K562 (cell line): ENCODE measurements at regions of chr9 and their contacts with region 1.

Region 1: DNA sequence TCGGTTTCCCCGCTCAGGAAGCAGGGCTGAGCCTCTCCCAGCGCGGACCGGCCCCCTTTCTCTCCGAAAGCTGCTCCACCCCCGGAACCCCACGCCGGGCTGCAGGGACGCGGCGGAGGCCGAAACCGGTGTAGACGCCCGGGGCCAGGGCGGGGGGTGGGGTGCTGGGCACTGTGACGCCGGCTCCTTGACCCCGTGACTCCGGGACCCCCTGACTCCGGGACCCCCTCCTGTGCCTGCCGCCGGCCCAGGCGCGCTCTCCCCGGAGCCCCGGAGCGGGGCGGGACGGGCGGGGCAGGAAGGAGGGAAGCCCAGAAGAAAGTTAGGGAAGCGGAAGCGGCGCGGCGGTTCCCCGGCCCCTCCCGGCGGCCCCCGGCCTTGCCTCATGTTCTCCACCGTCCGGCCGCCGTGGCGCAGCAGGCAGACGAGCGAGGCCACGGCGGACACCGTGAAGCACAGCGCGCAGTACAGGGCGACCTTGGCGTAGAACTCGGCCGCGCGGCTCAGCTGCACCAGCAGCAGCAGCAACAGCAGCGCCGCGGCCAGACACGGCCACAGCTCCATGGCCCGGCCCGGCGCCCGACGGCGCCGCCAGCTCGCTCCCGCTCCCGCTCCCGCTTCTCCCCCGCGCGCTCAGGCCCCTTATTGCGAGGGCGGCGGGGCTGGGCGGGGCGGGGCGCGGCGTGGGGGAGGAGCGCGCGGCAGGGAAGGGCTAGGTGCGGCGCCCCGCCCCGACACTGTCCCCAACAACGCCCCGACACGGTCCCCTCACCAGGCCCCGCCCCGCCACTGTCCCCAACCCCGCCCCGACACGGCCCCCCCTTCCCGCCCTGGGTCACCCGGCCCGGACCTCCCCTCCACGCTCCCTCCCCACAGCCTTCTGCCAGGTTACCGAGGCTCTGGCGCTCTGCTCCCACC is at the start of gene AGPAT2:
- DNase-seq: peak; percentile 89 to 99 (median 98)
- ATAC-seq: peak; percentile 92
- H3K4me3 ChIP-seq: peak within 1 kb of the TSS; percentile 81
- H3K27ac ChIP-seq: peak within 1 kb of the TSS; percentile 95
- H3K4me1 ChIP-seq: peaks cover 6 to 85% of the 10 kb centered on the region in 2 experiments; a peak in 4 of 5 replicates
- H3K27me3 ChIP-seq: no peaks in the 10 kb centered on the region
- CTCF ChIP-seq: 0 out of 6 replicates have a peak, but pooled peaks of 1 of the 3 experiments have one; percentile 1
- EP300 ChIP-seq: no peak
- POLR2A ChIP-seq: peak; percentile 86
- RAD21 ChIP-seq: peak in 1 of 2 experiments; percentile 17; a peak in 2 of 4 replicates
- polyA plus RNA-seq, gene AGPAT2: 0.13 to 0.45 TPM

Region 2: DNA sequence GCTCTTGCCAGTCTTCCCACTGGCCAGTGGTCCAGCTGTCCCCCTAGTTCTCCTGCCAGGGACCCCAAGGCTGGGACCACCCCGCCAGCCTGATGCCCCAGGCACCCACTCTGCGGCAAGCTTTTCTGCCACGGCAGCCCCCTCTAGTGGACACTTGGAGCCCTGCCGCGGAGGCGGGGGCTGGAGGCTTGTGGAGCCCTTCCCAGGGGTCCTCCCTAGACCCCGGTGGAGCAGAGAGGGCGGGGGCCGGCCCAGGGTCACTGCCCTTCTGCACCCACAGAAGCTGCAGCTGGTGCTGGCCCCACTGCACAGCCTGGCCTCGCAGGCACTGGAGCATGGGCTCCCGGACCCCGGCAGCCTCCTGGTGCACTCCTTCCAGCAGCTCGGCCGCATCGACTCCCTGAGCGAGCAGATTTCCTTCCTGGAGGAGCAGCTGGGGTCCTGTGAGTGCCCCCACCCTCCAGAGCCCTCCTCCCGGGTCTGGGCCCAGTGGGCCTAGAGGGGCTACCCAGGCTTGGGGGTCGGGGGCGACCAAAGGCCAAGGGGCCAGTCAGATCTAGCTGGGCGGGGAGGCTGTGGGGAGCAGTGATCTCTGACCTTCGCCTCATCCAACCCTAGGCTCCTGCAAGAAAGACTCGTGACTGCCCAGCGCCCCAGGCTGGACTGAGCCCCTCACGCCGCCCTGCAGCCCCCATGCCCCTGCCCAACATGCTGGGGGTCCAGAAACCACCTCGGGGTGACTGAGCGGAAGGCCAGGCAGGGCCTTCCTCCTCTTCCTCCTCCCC is 15.2 kb before region 1 on chr9:
- CTCF ChIA-PET with region 1: no interaction called
- POLR2A ChIA-PET with region 1: interaction called, 11 read pairs
- in situ Hi-C with region 1: no loop called
- intact Hi-C with region 1: no loop called
- DNase-seq: peak; percentile 61 to 72 (median 65)
- ATAC-seq: peak; percentile 63
- H3K4me3 ChIP-seq: no peak overlapping the region
- H3K27ac ChIP-seq: peak overlapping the region; percentile 17; the same call in 1 of the 3 replicates
- H3K4me1 ChIP-seq: peaks cover 8 to 100% of the 10 kb centered on the region in 2 experiments; a peak in 4 of 5 replicates
- H3K27me3 ChIP-seq: no peaks in the 10 kb centered on the region
- CTCF ChIP-seq: peak; percentile 72 to 88 (median 82)
- EP300 ChIP-seq: no peak
- POLR2A ChIP-seq: peak; percentile 74
- RAD21 ChIP-seq: peak; percentile 16 to 42; a peak in 2 of 4 replicates